Vagina (tissue), 2 donors: ENCODE measurements at regions of chr18 and their contacts with region 1.

Region 1: GRCh38 chr18:77737412-77737811 is 487.8 kb downstream of the GALR1 start:
- DNase-seq: no peak
- H3K4me3 ChIP-seq: no peak overlapping the region
- H3K27ac ChIP-seq: no peak overlapping the region
- H3K4me1 ChIP-seq: no peaks in the 10 kb centered on the region
- H3K27me3 ChIP-seq: no peaks in the 10 kb centered on the region
- CTCF ChIP-seq: no peak
- POLR2A ChIP-seq: no peak

Region 2: DNA sequence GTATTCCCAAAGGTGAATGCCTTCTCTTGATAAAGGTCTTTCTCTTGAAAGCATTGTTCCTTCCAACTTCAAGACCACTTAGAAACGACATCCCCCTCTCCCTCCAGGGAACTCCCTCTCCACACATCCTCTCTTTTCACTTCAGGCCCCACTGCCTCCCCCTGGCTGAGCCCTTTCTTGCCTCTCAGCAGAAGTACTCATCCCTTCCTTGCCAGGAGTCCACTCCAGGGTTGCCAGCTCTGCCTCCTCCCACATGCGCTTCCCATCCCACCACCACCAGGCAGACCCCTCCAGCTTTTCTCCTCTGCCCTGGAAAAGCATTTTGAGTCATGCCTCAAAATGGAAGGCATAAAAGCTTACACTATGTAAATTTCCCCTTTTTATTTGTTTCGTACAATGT is 1115.9 kb after region 1 on chr18:
- intact Hi-C with region 1: loop called (anchors 5 kb)
- DNase-seq: peak in 1 of 2 donors; percentile 52
- H3K4me3 ChIP-seq: no peak overlapping the region
- H3K27ac ChIP-seq: no peak overlapping the region
- H3K4me1 ChIP-seq: no peaks in the 10 kb centered on the region
- H3K27me3 ChIP-seq: no peaks in the 10 kb centered on the region
- CTCF ChIP-seq: no peak
- POLR2A ChIP-seq: no peak